HCT116 (cell line): ENCODE measurements at regions of chr10 and their contacts with region 1.

Region 1: GRCh38 chr10:124530215-124530665 is 68.6 kb downstream of the LHPP start:
- DNase-seq: peak; percentile 62
- ATAC-seq: peak; percentile 88
- H3K4me3 ChIP-seq: no peak overlapping the region
- H3K27ac ChIP-seq: no peak overlapping the region
- H3K4me1 ChIP-seq: peaks cover under 1 to 24% of the 10 kb centered on the region in 2 experiments; a peak in 3 of 4 replicates
- H3K27me3 ChIP-seq: no peaks in the 10 kb centered on the region
- CTCF ChIP-seq: peak; percentile 92 to 98 (median 98)
- POLR2A ChIP-seq: no peak
- RAD21 ChIP-seq: peak; percentile 99

Region 2: GRCh38 chr10:124827474-124827873 is 297.2 kb after region 1 on chr10:
- CTCF ChIA-PET with region 1: interaction called, 13 read pairs
- POLR2A ChIA-PET with region 1: no interaction called
- RAD21 ChIA-PET with region 1: interaction called, 3 to 5 read pairs
- intact Hi-C with region 1: loop called (anchors 1 kb)
- DNase-seq: no peak
- ATAC-seq: no peak
- H3K4me3 ChIP-seq: no peak overlapping the region
- H3K27ac ChIP-seq: no peak overlapping the region
- H3K4me1 ChIP-seq: no peaks in the 10 kb centered on the region
- H3K27me3 ChIP-seq: no peaks in the 10 kb centered on the region
- CTCF ChIP-seq: peak; percentile 51 to 72 (median 60); a peak in 5 of 6 replicates
- POLR2A ChIP-seq: no peak
- RAD21 ChIP-seq: peak; percentile 58

Region 3: GRCh38 chr10:124983255-124983705 is 453.0 kb after region 1 on chr10:
- CTCF ChIA-PET with region 1: no interaction called
- POLR2A ChIA-PET with region 1: no interaction called
- RAD21 ChIA-PET with region 1: no interaction called
- intact Hi-C with region 1: loop called (anchors 10 kb)
- DNase-seq: no peak
- ATAC-seq: 0 out of 2 replicates have a peak, but pooled peaks have one; percentile 37
- H3K4me3 ChIP-seq: no peak overlapping the region
- H3K27ac ChIP-seq: no peak overlapping the region
- H3K4me1 ChIP-seq: no peaks in the 10 kb centered on the region
- H3K27me3 ChIP-seq: no peaks in the 10 kb centered on the region
- CTCF ChIP-seq: no peak
- POLR2A ChIP-seq: no peak
- RAD21 ChIP-seq: no peak

Region 4: GRCh38 chr10:125375210-125375609 is 845.0 kb after region 1 on chr10:
- CTCF ChIA-PET with region 1: no interaction called
- POLR2A ChIA-PET with region 1: no interaction called
- RAD21 ChIA-PET with region 1: no interaction called
- intact Hi-C with region 1: loop called (anchors 5 kb)
- DNase-seq: peak; percentile 29
- ATAC-seq: peak; percentile 46
- H3K4me3 ChIP-seq: no peak overlapping the region
- H3K27ac ChIP-seq: no peak overlapping the region
- H3K4me1 ChIP-seq: no peaks in the 10 kb centered on the region
- H3K27me3 ChIP-seq: no peaks in the 10 kb centered on the region
- CTCF ChIP-seq: peak; percentile 15 to 81 (median 34); a peak in 5 of 6 replicates
- POLR2A ChIP-seq: no peak
- RAD21 ChIP-seq: peak; percentile 81